Posterior vena cava (tissue), 2 donors: ENCODE measurements at regions of chr9 and their contacts with region 1.

Region 1: GRCh38 chr9:14645648-14646047 is 47.6 kb downstream of the ZDHHC21 start:
- DNase-seq: no peak

Region 2: GRCh38 chr9:14690948-14691730 is 45.5 kb after region 1 on chr9:
- intact Hi-C with region 1: loop called in 1 of 2 experiments (anchors 2 kb)
- DNase-seq: no peak